Dendritic cell treated with granulocyte-macrophage colony-stimulating factor and Interleukin-4, amounts not matched to agents 40 ng/mL and 50 ng/mL, for 4 days (primary cell): ENCODE measurements at regions of chr1 and their contacts with region 1.

Region 1: GRCh38 chr1:15046487-15047165 is 106.9 kb upstream of the TMEM51 start:
- H3K4me3 Mint-ChIP-seq: no peak overlapping the region
- H3K27ac Mint-ChIP-seq: no peak overlapping the region
- H3K4me1 Mint-ChIP-seq: no peaks in the 10 kb centered on the region
- H3K27me3 Mint-ChIP-seq: no peaks in the 10 kb centered on the region

Region 2: GRCh38 chr1:14113841-14114567 is 932.6 kb before region 1 on chr1:
- intact Hi-C with region 1: loop called (anchors 10 kb)
- H3K4me3 Mint-ChIP-seq: no peak overlapping the region
- H3K27ac Mint-ChIP-seq: no peak overlapping the region
- H3K4me1 Mint-ChIP-seq: peaks cover 8% of the 10 kb centered on the region
- H3K27me3 Mint-ChIP-seq: peaks cover 8% of the 10 kb centered on the region

Region 3: DNA sequence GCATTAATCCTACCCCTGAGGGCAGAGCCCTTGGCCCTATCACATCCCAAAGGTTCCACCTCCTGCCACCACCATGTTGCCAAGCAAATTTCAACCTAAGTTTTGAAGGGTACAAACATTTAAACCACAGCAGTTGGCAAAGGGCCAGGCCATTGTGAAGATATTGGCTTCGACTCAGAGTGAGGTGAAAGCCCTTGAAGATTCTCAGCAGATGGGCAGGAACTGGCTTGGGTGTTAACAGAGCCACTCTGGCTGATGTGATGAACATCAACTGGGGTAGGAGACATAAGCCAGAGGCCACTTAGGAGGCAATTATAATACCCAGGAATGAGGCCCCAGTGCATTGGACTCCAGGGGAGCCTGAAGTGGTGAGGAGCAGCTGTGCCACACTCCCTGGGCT is 655.8 kb before region 1 on chr1:
- intact Hi-C with region 1: loop called (anchors 10 kb)
- H3K4me3 Mint-ChIP-seq: no peak overlapping the region
- H3K27ac Mint-ChIP-seq: no peak overlapping the region
- H3K4me1 Mint-ChIP-seq: no peaks in the 10 kb centered on the region
- H3K27me3 Mint-ChIP-seq: peaks cover 4% of the 10 kb centered on the region